Right ventricle myocardium superior (tissue), 1 donor: ENCODE measurements at regions of chr2 and their contacts with region 1.

Region 1: DNA sequence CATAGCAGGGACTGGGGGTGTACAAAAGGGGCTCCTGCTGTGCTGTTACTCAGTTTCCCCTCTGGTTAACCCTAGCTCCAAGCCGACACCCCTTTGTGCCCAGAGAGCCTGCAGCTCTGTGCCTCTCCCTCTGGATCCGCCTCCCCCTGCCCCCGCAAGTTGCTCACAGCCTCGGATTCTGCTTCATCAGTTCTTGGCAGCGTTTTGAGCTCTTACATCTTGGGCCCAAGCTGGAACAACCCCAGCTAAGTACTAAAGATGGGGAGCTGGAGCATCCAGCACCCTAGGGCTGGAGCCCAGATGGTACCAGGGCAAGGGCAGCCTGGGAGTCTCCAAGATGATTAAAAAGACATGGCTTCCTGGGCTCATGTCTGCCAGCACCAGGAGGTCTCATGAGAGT is 40.7 kb downstream of the POMC start:
- DNase-seq: no peak
- ATAC-seq: no peak

Region 2: DNA sequence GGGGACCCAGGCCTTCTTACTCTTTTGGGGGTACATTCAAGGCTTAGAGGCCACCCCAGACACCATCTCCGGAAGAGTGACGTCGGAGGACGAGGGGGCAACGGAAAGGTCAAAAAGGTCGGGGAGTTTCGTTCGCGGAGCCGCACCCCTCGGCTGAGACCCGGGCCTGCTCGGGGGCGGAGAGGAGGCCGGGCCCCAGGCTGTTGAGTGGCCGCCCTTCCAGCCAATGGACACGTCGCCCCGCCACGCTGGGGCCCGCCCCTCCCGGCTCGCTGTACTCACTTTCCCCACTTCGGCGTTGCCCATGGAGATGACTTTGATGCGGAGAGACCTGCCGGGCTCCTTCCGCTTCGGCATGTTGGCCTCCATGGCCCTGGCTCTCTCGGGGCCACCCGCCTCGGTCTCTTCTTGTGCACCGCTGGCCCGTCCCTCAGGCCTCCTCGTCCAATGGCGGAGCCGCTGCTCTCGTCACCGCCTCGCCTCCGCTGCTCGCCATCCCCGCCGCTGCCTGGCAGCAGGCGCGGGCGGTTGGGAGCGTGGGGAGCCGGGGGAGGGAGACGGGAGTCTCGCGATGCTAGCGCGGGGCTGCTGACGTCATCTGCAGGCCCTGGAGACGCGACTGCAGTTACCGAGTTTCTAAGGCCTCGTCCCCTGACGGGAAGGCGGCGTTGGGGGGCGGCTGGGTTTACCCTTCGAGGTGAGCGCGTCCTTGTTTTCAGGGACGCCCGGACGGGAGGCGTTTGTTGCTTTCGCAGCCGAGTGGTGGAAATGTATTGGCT is 155.9 kb before region 1 on chr2 and contains the start of gene DNAJC27:
- intact Hi-C with region 1: loop called (anchors 1 kb)
- DNase-seq: peak; percentile 99
- ATAC-seq: peak; percentile 96
- total RNA-seq, gene DNAJC27: 8.5 TPM

Region 3: GRCh38 chr2:25041928-25042320 is 85.7 kb before region 1 on chr2 and contains the start of gene EFR3B:
- intact Hi-C with region 1: loop called (anchors 10 kb)
- DNase-seq: peak; percentile 98
- ATAC-seq: peak; percentile 99
- total RNA-seq, gene EFR3B: 3.8 TPM